GM18951 (cell line): ENCODE measurements at regions of chr18 and their contacts with region 1.

Region 1: GRCh38 chr18:34122724-34123334 is 101.9 kb downstream of the NOL4 start:
- POLR2A ChIP-seq: no peak

Region 2: DNA sequence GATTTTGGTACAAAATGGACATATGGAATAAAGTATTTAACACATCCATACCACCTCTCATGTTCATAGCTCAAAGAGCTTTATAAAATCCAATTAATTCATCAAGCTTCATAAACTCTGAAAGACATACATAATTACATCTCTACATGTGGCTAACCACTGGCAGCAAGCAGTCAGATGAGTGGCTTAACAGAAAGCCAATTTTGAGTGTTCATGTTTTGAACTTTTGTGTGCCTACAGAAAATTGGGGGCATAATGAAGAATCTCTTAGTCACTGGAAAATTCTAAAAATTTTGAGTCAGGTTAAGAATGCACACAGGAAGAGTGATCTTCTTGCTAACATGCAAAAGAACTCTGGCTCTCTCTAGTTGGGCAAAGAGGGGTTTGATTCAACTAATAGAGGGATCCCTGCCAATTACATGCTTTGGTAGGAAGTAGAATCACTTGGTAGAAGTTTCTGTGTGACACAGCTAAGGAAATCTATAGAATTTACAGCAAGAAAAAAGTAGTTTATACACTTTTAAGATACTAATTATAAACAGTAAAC is 185.5 kb before region 1 on chr18:
- in situ Hi-C with region 1: no loop called
- POLR2A ChIP-seq: no peak

Region 3: GRCh38 chr18:34322365-34323289 is 199.8 kb after region 1 on chr18:
- in situ Hi-C with region 1: loop called (anchors 10 kb)
- POLR2A ChIP-seq: no peak